ENCODE measurements at regions of chr1 and their contacts with region 1.

Region 1: DNA sequence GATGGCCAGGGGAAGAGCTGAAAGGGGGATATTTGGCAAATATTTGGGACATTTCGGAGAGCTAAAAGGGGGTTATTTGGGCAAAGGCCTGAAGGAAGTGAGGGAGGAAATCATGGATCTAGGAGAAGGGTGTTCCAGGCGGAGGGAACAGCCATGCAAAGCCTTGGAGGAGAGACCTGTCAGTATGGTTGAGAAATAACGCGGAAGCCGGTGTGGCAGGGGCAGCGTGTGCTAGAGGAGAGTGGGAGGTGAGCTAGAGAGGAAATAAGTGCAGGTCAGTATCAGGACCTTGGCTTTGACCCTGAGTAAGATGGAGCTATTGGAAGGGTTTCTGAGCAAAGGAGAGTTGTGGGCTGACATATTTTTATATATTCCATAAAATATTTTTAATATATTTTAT is 3.0 kb downstream of the CTRC start:
- DNase-seq: no peak

Region 2: GRCh38 chr1:15538770-15539169 is 97.5 kb after region 1 on chr1:
- CTCF ChIA-PET with region 1: interaction called, 10 read pairs
- POLR2A ChIA-PET with region 1: no interaction called
- DNase-seq: no peak

Region 3: DNA sequence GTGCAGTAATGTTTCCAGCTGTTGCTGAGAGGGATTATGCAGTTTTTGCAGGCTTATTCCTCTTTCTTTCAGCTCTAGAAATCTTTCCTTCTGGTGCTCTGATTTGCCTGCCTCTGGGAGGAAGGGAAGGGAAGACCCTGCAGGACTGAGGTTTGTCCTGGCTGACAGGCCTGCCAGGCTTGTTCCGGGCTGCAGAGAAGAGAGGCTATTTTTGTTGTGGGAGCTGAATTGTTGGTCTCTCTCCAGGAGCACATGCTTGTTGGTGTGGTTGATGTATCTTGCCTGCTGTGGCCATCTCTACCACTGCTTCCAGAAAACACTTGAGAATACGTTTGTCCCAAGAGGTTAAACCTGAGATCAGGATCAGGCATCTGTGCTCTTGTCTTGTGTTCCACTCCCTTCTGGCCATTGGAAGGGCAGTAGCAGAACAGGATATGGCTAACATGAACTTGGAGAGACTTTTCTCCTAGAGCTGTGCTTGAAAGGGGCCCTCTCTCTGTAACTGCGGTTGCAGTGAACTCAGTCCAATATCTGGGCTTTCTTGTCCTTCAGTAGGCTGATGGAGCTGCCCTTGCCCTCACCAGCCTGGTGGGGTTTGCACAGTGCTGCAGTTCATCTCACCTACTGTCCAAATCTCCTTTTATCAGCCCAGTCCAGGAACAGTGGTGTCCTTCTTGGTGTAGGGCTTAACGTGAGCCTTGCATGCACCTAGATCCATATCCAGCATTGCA is 273.3 kb after region 1 on chr1:
- CTCF ChIA-PET with region 1: no interaction called
- POLR2A ChIA-PET with region 1: no interaction called
- DNase-seq: no peak

Measured in HEK293T (cell line).